ENCODE measurements at regions of chr1 and their contacts with region 1.

Region 1: DNA sequence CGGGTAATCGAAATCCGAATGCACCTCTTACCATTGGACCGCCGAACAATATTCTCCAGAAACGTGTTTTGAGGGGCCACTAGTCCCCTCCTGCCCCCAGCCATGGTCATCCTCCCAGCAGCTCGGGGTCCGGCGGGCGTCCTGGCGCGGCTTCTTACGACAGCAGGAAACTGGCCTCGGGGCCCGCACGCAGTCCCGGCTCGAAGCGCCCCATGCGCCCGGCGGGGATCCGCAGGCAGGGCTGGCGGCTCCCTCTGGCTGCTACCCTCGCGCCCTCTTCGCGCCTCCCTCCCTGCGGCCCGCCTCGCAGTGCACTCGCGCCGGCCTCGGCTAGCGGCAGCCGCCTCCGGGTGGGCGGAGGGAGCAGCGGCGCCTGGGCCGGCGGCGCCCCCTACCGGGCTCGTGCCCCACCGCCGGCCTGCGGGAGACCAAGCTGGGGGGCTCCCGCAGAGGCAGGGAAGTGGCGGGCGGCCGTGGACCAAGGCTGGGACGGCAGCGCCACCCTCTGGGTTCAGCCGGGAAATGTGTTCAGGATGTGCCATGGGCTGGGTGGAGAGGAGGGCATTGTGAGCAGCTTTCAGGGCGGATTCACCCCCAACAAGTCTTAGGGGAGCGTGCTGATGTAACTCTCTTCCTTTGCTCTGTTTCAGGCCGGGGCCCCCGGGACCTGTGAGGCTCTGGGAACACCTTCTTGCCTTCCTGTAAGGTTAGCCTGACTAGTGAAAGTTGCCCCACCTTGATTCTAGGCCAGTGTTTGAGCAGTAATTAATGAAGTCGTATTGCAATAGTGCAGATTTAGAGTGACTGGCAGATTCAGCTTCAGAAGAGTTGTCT is at the start of gene KCNH1:
- DNase-seq: peak; percentile 13 to 81
- H3K4me3 ChIP-seq: peak within 1 kb of the TSS; percentile 58 to 63
- H3K27ac ChIP-seq: no peak within 1 kb of the TSS
- H3K4me1 ChIP-seq: peaks cover 0 to 10% of the 10 kb centered on the region in 2 donors
- H3K27me3 ChIP-seq: no peaks in the 10 kb centered on the region
- CTCF ChIP-seq: peak; percentile 63 to 95 (median 74)
- total RNA-seq, gene KCNH1: not detected

Region 2: DNA sequence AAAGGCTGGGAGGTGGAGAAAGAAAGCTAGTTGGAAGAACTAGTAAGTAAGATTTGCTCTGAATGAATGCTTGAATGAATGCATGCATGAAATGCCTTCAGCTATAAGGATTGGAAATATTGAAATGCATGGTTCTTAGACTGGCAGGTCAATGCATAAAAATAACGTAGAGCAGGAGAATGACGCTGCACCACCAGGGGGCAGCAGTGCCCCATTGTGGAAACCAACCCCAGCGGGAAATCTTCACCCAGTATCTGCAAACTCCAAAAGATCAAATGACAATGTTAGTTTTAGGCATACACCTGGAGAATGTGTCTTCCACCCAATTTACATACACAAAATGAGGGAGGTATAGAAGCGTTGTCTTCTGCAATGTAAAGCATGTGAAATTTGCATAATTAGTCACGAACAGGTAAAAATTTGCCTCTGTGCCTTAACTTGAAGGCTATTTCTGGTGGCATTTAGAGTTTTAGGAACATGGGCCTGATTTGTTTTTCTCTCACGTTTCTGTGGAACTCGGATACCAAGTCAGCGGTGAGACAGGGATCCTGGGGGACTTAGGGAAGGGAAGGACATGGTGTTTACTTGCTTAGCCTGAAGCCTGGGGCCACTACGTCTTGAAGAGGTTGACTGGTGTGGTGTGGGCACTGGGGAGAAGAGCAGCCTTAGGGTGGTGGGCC is 726.7 kb before region 1 on chr1:
- intact Hi-C with region 1: loop called (anchors 1 kb)
- DNase-seq: peak in 1 of 2 donors; percentile 74
- H3K4me3 ChIP-seq: no peak overlapping the region
- H3K27ac ChIP-seq: no peak overlapping the region
- H3K4me1 ChIP-seq: no peaks in the 10 kb centered on the region
- H3K27me3 ChIP-seq: no peaks in the 10 kb centered on the region
- CTCF ChIP-seq: peak; percentile 70 to 92 (median 84)

Region 3: DNA sequence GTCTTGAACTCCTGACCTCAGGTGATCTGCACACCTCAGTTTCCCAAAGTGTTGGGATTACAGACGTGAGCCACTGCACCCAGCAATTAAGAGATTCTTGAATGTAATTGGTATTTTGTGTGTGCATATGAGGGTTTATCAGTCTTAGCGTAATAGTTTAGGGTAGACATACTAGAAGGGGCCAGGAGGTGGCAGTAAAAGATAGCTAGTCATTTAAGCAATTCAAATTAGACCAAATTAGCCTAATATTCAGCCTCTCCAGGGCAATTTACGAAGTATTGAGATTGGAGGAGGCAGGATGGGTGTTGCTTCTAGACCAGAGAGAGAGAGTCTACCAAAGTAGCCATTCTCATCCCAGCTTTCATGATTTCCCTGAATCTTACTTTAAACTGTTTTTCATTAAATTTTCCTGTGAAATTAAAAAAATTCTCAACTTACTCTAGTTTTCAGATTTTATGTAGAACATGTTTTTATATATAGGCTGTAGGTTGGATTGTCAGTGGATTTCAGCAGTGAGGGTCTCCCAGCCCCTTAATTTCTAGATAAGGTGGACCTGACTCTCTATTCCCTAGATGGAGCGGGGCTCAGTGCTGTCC is 685.7 kb before region 1 on chr1:
- intact Hi-C with region 1: loop called (anchors 1 kb)
- DNase-seq: no peak
- H3K4me3 ChIP-seq: no peak overlapping the region
- H3K27ac ChIP-seq: no peak overlapping the region
- H3K4me1 ChIP-seq: no peaks in the 10 kb centered on the region
- H3K27me3 ChIP-seq: no peaks in the 10 kb centered on the region
- CTCF ChIP-seq: peak in 2 of 3 experiments; percentile 30 to 55

Region 4: GRCh38 chr1:210584439-210585113 is 549.5 kb before region 1 on chr1:
- intact Hi-C with region 1: loop called (anchors 2 kb)
- DNase-seq: peak in 1 of 2 donors; percentile 64
- H3K4me3 ChIP-seq: no peak overlapping the region
- H3K27ac ChIP-seq: no peak overlapping the region
- H3K4me1 ChIP-seq: no peaks in the 10 kb centered on the region
- H3K27me3 ChIP-seq: no peaks in the 10 kb centered on the region
- CTCF ChIP-seq: peak; percentile 31 to 63 (median 34)